ENCODE measurements at regions of chr11 and their contacts with region 1.

Region 1: GRCh38 chr11:9739123-9739894 is 75.4 kb downstream of the SWAP70 start:
- DNase-seq: peak; percentile 32
- CTCF ChIP-seq: no peak

Region 2: DNA sequence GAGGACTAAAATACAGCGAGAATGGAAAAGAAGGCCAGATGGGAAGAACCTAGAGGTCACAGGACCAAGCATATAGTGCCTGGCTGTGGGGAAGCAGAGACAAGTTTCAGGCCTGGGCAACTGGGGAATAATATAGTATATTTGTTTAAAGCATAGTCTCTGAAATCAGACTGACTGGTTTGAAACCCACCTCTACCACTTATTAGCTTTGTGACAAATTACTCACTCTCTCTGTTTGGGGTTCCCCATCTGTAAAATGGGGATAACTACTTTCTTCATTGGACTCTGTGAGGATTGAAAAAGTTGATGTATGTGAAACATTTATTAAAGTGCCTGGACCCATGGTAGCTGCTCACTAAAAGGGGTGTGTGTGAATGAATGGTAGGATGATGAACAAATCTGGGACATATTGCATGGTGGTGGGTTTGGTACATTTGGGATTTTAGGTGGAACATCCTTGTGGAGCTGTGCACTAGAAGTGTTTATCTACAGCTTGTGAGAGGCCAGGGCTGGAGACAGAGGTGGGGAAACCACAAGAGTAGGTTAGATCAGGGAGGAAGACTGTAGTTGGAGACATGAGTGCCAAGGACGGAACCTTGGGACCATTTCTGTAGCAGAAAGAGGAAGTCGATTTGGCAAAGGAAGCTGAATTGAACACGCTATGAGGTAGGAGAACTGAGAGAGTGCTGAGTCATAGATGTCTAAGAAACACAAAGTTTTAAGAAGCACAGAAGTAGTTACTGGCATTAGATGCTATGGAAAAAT is 22.9 kb before region 1 on chr11:
- CTCF ChIA-PET with region 1: interaction called, 12 read pairs
- POLR2A ChIA-PET with region 1: no interaction called
- DNase-seq: peak; percentile 64
- CTCF ChIP-seq: no peak

Region 3: GRCh38 chr11:9726321-9727022 is 12.8 kb before region 1 on chr11:
- CTCF ChIA-PET with region 1: interaction called, 14 read pairs
- POLR2A ChIA-PET with region 1: interaction called, 3 read pairs
- DNase-seq: peak; percentile 28
- CTCF ChIP-seq: no peak

Region 4: GRCh38 chr11:9757809-9758636 is 18.7 kb after region 1 on chr11:
- CTCF ChIA-PET with region 1: interaction called, 10 read pairs
- POLR2A ChIA-PET with region 1: no interaction called
- DNase-seq: peak; percentile 97
- CTCF ChIP-seq: peak; percentile 92